ENCODE measurements at regions of chr7 and their contacts with region 1.

Region 1: DNA sequence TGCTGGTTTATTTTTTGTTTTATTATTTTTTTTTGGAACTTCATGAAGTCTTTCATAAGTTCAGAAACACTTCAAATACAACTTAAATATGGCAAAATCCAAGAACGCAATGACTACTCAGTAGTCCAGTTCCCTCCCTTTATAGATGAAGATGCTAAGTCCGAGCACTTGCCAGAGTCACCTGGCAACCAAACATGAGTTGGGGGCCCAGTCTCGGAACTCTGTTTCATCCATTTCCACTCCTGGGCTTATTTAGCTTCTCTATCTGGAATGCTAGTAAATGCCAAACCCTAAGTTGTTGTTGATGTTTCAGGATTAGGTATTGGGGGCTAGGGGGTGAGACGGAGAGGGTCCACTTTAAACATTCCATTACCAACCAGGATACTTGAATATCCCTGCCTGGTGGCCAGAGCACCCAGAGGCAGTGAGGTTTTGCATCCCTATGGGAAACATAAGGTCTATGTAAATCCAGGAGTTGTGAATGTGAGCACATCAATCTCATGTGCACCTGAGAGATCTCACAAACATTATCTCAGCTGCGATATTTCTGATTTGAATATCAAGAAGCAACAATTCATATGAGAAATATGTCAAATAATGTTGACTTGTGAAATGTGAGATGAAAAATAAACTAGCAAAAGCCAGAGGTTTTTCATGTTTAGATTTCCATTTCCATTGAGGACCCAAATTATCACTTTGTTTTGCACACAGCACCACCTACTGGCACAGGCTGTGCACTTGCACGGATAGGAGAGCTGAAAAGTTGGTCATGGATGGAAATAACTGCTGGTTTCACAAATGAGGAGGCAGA is 129.3 kb downstream of the PKD1L1 start:
- DNase-seq: peak; percentile 90
- H3K4me3 Mint-ChIP-seq: no peak overlapping the region
- H3K27ac Mint-ChIP-seq: no peak overlapping the region
- H3K4me1 Mint-ChIP-seq: peaks cover 23% of the 10 kb centered on the region
- H3K27me3 Mint-ChIP-seq: no peaks in the 10 kb centered on the region
- CTCF ChIP-seq: peak; percentile 96

Region 2: DNA sequence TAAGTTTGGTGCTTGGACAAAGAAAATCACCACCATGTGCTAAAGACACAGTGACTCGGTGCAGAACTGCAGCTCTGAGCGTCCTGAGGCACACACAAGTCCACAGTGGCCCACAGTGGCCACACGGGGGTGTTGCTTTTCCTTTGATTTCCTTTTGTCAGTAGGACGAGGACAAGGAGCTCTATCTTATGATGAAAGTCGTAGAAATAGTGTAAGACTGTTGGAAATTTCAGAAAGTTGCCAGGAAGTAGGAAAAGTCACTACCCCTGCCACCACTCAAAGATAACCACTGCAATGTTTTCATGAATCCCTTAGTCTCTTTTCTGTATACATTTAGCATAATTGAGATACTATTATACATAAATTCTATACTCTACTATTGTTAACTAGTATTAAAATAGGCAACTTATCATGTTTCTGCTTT is 383.1 kb before region 1 on chr7:
- CTCF ChIA-PET with region 1: interaction called, 28 read pairs
- intact Hi-C with region 1: loop called (anchors 1 kb)
- DNase-seq: peak; percentile 74
- H3K4me3 Mint-ChIP-seq: no peak overlapping the region
- H3K27ac Mint-ChIP-seq: peak overlapping the region; percentile 50
- H3K4me1 Mint-ChIP-seq: peaks cover 28% of the 10 kb centered on the region
- H3K27me3 Mint-ChIP-seq: no peaks in the 10 kb centered on the region
- CTCF ChIP-seq: peak; percentile 78

Region 3: GRCh38 chr7:47574482-47575329 is 244.3 kb before region 1 on chr7:
- CTCF ChIA-PET with region 1: interaction called, 4 read pairs
- intact Hi-C with region 1: loop called (anchors 2 kb)
- DNase-seq: no peak
- H3K4me3 Mint-ChIP-seq: peak overlapping the region; percentile 32
- H3K27ac Mint-ChIP-seq: peak overlapping the region; percentile 61
- H3K4me1 Mint-ChIP-seq: peaks cover 87% of the 10 kb centered on the region
- H3K27me3 Mint-ChIP-seq: no peaks in the 10 kb centered on the region
- CTCF ChIP-seq: no peak

Region 4: DNA sequence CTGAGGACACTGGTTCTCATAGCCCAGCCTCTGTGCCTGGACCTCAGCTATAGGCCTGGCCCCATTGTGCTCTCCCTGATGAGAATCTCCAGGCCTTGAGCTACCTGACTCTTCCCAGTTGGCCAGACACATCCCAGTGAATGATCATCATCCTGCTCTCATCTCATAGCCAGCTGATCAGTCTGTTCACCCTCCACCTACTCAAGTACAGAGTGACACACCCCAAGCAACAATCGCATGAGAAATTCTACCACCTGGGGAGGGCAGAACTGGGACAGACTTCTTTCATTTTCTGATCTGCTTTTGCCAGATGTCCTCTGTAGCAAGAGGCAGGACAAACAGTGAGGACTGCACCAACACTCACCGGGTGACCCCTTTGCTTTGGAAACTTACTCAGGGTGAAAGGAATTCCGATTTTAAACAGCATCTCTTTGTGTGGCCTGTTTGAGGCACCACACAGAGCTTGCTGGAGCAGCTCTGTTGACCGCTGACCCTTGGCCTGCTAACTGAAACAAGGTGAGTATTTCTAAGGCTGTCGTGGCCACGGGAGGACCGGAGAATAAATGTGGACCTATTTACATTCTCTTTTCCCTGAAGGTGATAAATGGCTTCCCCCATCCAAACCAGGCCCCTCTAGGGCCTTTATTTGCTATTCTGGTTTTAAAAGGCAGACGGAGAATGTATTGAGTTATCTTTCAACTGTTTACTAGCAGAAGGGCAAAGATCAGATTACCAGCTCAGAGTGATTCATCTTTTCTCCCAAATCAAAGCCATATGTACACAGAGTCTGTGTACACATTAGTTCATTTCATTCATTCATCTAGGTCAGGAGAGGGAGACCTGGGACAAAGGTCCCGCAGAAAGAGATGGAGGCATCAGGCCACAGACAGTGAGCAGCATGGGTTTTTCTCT is 55.7 kb before region 1 on chr7:
- CTCF ChIA-PET with region 1: interaction called, 8 read pairs
- intact Hi-C with region 1: loop called (anchors 1 kb)
- DNase-seq: peak; percentile 78
- H3K4me3 Mint-ChIP-seq: peak overlapping the region; percentile 15
- H3K27ac Mint-ChIP-seq: peak overlapping the region; percentile 86
- H3K4me1 Mint-ChIP-seq: peaks cover 54% of the 10 kb centered on the region
- H3K27me3 Mint-ChIP-seq: no peaks in the 10 kb centered on the region
- CTCF ChIP-seq: no peak

Measured in Calu3 (cell line).